Esophagus muscularis mucosa (tissue), 4 donors: ENCODE measurements at regions of chr16 and their contacts with region 1.

Region 1: GRCh38 chr16:50665128-50665878 is 15.8 kb downstream of the SNX20 start:
- DNase-seq: peak; percentile 95
- H3K4me3 ChIP-seq: peak overlapping the region; percentile 52 to 62 (median 59)
- H3K27ac ChIP-seq: peak overlapping the region; percentile 70 to 82 (median 77)
- H3K4me1 ChIP-seq: peaks cover 10 to 31% (median 29%) of the 10 kb centered on the region in 4 donors
- H3K27me3 ChIP-seq: no peaks in the 10 kb centered on the region
- CTCF ChIP-seq: peak; percentile 89 to 90 (median 89)
- EP300 ChIP-seq: no peak
- POLR2A ChIP-seq: no peak

Region 2: DNA sequence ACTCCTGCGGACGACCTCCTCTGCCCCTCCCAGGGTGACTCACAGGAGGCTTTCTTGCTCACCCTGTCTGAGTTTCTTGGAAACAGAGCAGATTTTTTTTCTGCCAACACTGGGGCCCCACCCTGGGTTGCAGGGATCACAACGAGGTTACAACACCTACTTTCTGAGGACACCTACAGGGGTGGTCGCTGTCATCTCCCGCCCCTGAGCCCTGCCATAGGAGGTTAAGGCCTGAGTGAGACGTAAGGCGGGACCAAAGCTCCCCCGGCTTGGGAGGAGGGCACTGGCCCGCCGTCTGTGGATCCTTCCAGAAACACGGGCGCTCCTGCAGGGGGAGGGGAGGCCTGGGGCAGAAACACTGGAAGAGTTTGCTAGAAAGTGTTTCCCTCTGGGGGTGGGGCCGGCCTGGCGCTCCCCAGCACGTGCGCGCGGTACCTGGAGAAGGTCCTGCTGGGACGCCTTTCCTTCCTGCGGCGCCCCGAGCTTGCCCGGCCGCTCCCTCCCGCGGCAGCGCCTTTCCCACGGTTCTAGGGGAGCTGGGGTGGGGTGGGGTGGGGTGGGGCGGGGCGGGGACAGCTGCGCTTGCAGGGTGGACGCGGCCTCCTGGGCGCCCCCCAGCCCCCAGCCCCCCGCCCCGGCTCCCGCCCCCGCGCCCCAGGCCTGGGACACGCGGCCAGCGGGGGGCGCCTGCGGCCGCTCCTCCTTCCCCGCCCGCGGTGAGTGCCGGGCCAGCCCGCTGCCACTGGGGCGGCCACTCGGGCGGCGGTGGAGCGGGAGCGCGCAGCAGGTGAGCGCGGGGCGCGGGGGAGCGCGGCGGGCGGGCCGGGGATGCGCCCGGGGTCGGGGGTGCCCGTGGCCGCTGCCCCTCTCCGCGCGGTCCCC is 419.6 kb before region 1 on chr16:
- intact Hi-C with region 1: loop called (anchors 10 kb)
- DNase-seq: no peak
- H3K4me3 ChIP-seq: peak overlapping the region; percentile 68 to 72 (median 70)
- H3K27ac ChIP-seq: peak overlapping the region in 3 of 4 donors; percentile 63 to 68 (median 64)
- H3K4me1 ChIP-seq: peaks cover 4 to 31% (median 24%) of the 10 kb centered on the region in 4 donors
- H3K27me3 ChIP-seq: peaks cover 0 to 12% (median 0%) of the 10 kb centered on the region in 4 donors
- CTCF ChIP-seq: peak; percentile 21 to 50 (median 33)
- EP300 ChIP-seq: no peak
- POLR2A ChIP-seq: no peak